Heart left ventricle (tissue), 16 donors: ENCODE measurements at regions of chr11 and their contacts with region 1.

Region 1: GRCh38 chr11:108467091-108467823 is at the start of gene C11orf65:
- DNase-seq: peak; percentile 96 to 97 (median 96)
- ATAC-seq: peak; percentile 100
- H3K4me3 ChIP-seq: peak within 1 kb of the TSS; percentile 49 to 83 (median 68)
- H3K27ac ChIP-seq: peak within 1 kb of the TSS; percentile 84 to 100 (median 96)
- H3K4me1 ChIP-seq: peaks cover 0 to 16% (median 5%) of the 10 kb centered on the region in 12 donors
- H3K27me3 ChIP-seq: no peaks in the 10 kb centered on the region
- CTCF ChIP-seq: no peak
- POLR2A ChIP-seq: peak; percentile 77 to 98
- total RNA-seq, gene C11orf65: 0.33 to 1.9 (median 1.1) TPM in 6 of 9 donors, not detected in the others

Region 2: DNA sequence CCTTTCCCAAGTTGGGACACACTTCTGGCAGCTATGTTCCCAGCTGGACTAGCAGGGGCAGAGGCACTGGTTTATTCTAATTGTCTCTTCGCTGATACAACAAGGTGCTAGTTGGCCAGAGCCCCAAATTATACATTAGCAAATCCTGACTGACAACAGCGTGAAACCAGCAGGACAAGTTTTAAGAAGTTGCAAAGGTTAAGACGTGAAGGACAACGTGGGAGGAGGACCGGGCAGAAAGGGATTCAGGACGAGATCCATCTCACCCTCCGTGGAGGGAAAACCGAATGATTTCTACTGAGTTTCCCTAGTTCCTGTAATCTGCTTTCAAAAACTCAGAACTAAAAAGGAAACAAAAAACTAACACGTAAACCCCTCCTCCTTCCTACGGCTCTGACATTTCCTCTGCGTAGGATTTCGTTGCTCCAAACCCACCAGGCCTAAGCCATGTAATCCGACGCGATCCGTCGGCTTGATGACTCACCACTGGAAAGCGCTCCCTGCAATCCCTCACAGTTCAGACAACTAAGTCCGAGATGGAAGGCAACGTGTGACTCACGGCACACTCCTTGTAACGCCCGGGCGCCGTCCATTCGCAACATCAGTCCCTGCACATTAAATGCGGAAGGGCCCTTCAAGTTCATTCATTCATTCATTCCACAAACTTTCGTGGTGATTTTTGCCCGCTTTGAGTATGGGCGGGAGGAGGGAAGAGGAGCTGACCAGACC is 30.2 kb after region 1 on chr11:
- intact Hi-C with region 1: loop called in 4 of 10 experiments (anchors 1 to 2 kb)
- DNase-seq: peak; percentile 84 to 92 (median 87)
- ATAC-seq: peak; percentile 97 to 98 (median 98)
- H3K4me3 ChIP-seq: peak overlapping the region; percentile 64 to 95 (median 73)
- H3K27ac ChIP-seq: peak overlapping the region; percentile 84 to 98 (median 94)
- H3K4me1 ChIP-seq: peaks cover 0 to 16% (median 5%) of the 10 kb centered on the region in 12 donors
- H3K27me3 ChIP-seq: no peaks in the 10 kb centered on the region
- CTCF ChIP-seq: no peak
- POLR2A ChIP-seq: peak in 1 of 2 donors; percentile 82

Region 3: DNA sequence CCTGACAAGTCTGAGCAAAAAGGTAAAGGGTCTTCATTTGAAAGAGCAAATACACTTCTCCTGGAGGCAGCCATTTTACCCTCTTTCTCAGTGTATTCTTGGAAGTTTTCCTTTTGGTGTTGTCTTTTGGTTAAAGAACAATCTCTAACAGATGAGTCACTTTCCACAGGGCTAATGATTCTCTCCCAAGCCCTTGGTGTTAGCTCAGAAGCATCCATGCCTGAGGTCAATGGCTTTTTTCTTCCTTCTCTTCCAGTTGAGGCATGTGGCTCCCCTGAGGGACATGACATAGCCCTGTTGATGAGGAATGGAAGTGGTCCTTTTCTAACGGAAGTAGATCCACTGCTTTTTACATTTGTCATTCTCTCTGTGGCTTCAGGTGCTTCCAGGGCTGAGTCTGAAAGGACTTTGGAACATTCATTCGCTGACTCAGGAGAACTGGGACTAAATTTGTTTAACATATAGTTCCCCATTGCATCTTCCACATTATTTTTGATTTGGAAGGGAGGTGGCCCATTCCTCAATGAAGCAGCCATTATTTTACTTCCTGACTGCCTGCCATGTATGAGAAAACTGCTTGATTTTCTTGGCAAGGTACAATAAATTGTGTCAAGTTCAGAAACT is 44.7 kb after region 1 on chr11:
- intact Hi-C with region 1: no loop called
- DNase-seq: no peak
- ATAC-seq: no peak
- H3K4me3 ChIP-seq: no peak overlapping the region
- H3K27ac ChIP-seq: no peak overlapping the region
- H3K4me1 ChIP-seq: no peaks in the 10 kb centered on the region
- H3K27me3 ChIP-seq: no peaks in the 10 kb centered on the region
- CTCF ChIP-seq: no peak
- POLR2A ChIP-seq: no peak

Region 4: DNA sequence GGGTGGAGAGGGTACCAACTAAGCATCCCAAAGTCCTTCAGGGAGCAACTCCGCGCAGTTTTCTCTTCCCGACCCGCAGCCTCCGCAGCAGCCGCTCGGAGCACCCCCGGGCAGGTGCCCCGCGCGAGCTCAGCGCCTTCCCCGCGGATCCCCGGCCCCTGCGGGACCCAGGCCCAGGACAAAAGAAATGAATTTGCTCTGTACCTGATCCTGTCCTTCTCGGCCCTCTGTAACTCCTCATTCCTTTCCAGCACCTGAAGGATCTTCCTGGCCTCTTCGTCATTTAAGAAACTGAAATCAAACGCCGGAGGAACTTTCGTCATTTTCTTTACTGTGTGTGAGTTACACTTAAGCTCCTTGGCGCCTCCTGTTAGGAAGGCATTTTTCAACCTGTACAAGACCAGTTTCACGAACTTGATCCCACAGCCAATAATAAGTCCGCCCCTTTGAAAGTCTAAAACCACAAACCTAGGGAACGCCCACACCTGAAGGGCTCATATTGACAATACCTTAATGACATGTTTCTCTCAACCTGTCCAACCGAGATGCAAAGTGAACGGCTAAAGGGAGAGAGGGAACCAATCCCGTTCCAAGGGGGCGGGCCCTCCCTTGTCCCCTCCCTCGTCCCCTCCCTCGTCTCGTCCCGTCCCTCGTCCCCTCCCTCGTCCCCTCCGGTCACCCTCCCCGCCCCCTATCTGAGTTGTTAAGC is 126.1 kb after region 1 on chr11 and contains the start of gene EXPH5:
- intact Hi-C with region 1: loop called in 1 of 10 experiments (anchors 1 kb)
- DNase-seq: peak; percentile 78 to 88 (median 85)
- ATAC-seq: peak; percentile 92 to 100 (median 98)
- H3K4me3 ChIP-seq: peak within 1 kb of the TSS; percentile 37 to 77 (median 70)
- H3K27ac ChIP-seq: peak within 1 kb of the TSS in 1 of 12 donors; percentile 26
- H3K4me1 ChIP-seq: peaks cover 0 to 11% (median 3%) of the 10 kb centered on the region in 12 donors
- H3K27me3 ChIP-seq: peaks cover 0 to 41% (median 2%) of the 10 kb centered on the region in 9 donors
- CTCF ChIP-seq: no peak
- POLR2A ChIP-seq: no peak
- total RNA-seq, gene EXPH5: 0.37 to 4.2 (median 1.3) TPM

Region 5: DNA sequence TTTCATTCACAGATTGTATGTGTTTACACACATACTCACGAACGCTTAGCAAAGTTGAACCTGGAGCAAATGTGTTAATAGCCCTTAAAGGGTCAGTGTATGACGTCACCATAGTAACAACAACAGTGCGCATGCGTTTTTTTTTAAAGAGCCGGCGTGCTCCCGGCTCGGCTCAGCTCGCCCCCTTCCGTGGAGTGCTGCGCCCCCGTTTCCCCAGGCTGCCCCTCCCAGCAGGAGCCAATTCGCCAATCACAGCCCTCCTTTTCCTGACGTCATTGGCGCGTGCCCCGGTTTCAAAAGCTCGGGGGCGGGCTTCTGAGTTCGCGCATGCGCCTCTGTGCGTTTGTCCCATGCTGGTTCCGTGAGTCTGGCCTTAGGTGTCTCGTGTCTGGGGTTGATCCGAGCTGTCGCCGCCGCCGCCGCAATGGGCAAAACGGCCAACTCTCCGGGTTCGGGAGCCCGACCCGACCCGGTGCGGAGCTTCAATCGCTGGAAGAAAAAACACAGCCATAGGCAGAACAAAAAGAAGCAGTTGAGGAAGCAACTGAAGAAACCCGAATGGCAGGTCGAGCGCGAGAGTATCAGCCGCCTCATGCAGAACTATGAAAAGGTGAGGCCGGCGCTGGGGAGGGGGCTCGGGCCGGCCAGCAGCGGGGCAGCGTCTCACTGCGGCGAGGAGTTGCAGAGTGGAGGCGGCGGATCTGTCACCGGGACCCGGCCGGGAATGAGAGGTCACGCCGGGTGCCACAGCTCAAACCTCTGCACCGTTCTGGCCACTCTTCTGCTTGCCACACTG is 197.7 kb after region 1 on chr11 and contains the start of gene DDX10:
- intact Hi-C with region 1: loop called in 1 of 10 experiments (anchors 10 kb)
- DNase-seq: peak; percentile 98 to 99 (median 98)
- ATAC-seq: peak; percentile 99 to 100 (median 100)
- H3K4me3 ChIP-seq: peak within 1 kb of the TSS; percentile 53 to 99 (median 82)
- H3K27ac ChIP-seq: peak within 1 kb of the TSS in 11 of 12 donors; percentile 22 to 82 (median 64)
- H3K4me1 ChIP-seq: peaks cover 0 to 32% (median 23%) of the 10 kb centered on the region in 12 donors
- H3K27me3 ChIP-seq: no peaks in the 10 kb centered on the region
- CTCF ChIP-seq: peak in 4 of 12 donors; percentile 34 to 43 (median 38)
- POLR2A ChIP-seq: peak in 1 of 2 donors; percentile 60
- total RNA-seq, gene DDX10: 8.3 to 17.2 (median 12.1) TPM